ENCODE measurements at regions of chr6 and their contacts with region 1.

Region 1: DNA sequence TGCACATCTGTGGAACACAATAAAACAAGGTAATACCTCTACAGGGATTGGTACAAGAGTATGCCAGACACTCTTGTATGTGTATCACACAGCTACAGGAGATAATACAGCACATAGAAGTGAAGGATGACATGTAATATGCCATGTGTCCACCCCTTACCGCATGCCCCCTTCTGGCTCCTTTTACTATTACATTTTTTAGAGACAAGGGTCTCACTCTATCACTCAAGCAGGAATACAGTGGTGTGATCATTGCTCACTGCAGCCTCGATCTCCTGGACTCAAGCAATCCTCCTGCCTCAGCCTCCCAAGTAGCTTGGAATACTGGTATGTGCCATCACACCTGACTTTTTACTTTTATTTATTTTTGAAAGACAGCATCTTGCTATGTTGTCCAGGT is 4.2 kb upstream of the NCR3 start:
- DNase-seq: no peak
- ATAC-seq: no peak
- H3K4me3 ChIP-seq: no peak overlapping the region
- H3K27ac ChIP-seq: no peak overlapping the region
- H3K4me1 ChIP-seq: peaks cover 5% of the 10 kb centered on the region
- H3K27me3 ChIP-seq: no peaks in the 10 kb centered on the region
- CTCF ChIP-seq: peak in 5 of 7 experiments; percentile 9 to 43 (median 23)
- POLR2A ChIP-seq: no peak

Region 2: DNA sequence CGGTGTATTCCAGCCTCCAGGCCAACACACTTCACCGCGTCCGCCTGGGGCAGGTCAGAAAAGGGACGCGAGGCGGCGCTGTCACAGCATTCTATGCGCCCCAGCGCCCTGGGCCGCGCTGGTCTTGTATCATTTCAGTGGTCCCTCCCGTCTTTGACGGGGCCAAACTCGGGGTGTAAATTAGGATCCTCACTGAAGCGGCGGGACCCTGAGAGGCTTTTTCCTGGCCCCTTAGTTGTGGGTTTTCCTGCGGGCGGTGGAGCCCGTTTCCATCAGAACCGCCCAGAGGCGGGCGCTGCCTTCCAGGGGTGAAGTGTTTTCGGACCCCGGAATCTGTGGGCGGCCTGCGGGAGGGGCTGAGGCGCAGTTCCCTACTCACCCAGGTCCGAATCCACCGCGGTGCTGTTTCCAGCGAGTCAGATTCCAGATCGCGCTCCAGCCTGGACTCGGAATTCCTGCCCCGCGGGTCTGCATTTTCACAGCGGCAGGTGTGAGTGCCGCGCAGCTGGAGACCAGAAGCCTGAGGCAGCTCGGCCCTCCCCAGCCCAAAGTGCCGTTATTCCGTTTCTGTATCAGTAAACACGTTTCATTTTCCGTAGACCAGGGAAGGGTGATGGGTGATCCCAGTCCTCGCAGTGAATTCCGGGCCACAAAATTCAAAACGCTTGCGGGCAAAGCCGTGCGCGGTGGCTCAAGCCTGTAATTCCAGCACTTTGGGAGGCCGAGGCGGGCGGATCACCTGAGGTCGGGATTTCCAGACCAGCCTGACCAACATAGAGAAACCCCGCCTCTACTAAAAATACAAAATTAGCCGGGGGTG is 102.9 kb before region 1 on chr6:
- intact Hi-C with region 1: loop called (anchors 10 kb)
- DNase-seq: peak; percentile 77 to 87 (median 84)
- ATAC-seq: peak; percentile 81
- H3K4me3 ChIP-seq: peak overlapping the region; percentile 7 to 27
- H3K27ac ChIP-seq: peak overlapping the region in 3 of 4 donors; percentile 40 to 74 (median 52)
- H3K4me1 ChIP-seq: peaks cover 30% of the 10 kb centered on the region
- H3K27me3 ChIP-seq: no peaks in the 10 kb centered on the region
- CTCF ChIP-seq: peak; percentile 63 to 91 (median 83)
- POLR2A ChIP-seq: peak in 2 of 3 donors; percentile 18 to 43

Region 3: GRCh38 chr6:31546962-31547726 is 49.9 kb before region 1 on chr6 and contains the start of gene NFKBIL1:
- intact Hi-C with region 1: loop called (anchors 5 kb)
- DNase-seq: peak; percentile 93 to 96 (median 94)
- ATAC-seq: peak; percentile 94
- H3K4me3 ChIP-seq: peak within 1 kb of the TSS; percentile 15 to 21
- H3K27ac ChIP-seq: peak within 1 kb of the TSS; percentile 56 to 85 (median 71)
- H3K4me1 ChIP-seq: peaks cover 30% of the 10 kb centered on the region
- H3K27me3 ChIP-seq: no peaks in the 10 kb centered on the region
- CTCF ChIP-seq: peak in 2 of 7 experiments; percentile 2 to 3
- POLR2A ChIP-seq: peak in 2 of 3 donors; percentile 49 to 50
- total RNA-seq, gene NFKBIL1: 5.6 to 27.0 TPM

Region 4: GRCh38 chr6:31739639-31740396 is 142.8 kb after region 1 on chr6 and contains the start of gene MSH5:
- intact Hi-C with region 1: no loop called
- DNase-seq: peak; percentile 98 to 99 (median 99)
- ATAC-seq: peak; percentile 94
- H3K4me3 ChIP-seq: peak within 1 kb of the TSS; percentile 26 to 62
- H3K27ac ChIP-seq: peak within 1 kb of the TSS; percentile 35 to 91 (median 88)
- H3K4me1 ChIP-seq: peaks cover 45% of the 10 kb centered on the region
- H3K27me3 ChIP-seq: no peaks in the 10 kb centered on the region
- CTCF ChIP-seq: no peak
- POLR2A ChIP-seq: peak in 2 of 3 donors; percentile 58 to 67
- total RNA-seq, gene MSH5: 6.7 to 12.9 TPM

Measured in body of pancreas (tissue), 4 donors.